HEK293 (cell line): ENCODE measurements at regions of chr6 and their contacts with region 1.

Region 1: GRCh38 chr6:125839471-125839870 is 48.7 kb downstream of the NCOA7 start:
- H3K4me3 ChIP-seq: no peak overlapping the region
- H3K27ac ChIP-seq: no peak overlapping the region
- H3K4me1 ChIP-seq: peaks cover 3% of the 10 kb centered on the region
- CTCF ChIP-seq: no peak

Region 2: GRCh38 chr6:125858427-125859320 is 19.2 kb after region 1 on chr6:
- CTCF ChIA-PET with region 1: interaction called, 11 read pairs
- POLR2A ChIA-PET with region 1: no interaction called
- H3K4me3 ChIP-seq: no peak overlapping the region
- H3K27ac ChIP-seq: no peak overlapping the region
- H3K4me1 ChIP-seq: peaks cover 2% of the 10 kb centered on the region; the same call in 1 of the 2 replicates
- CTCF ChIP-seq: peak; percentile 68